ENCODE measurements at regions of chr1 and their contacts with region 1.

Region 1: GRCh38 chr1:188557052-188557451 is 1728.3 kb downstream of the PLA2G4A start:
- DNase-seq: no peak
- ATAC-seq: no peak
- H3K4me3 ChIP-seq: no peak overlapping the region
- H3K27ac ChIP-seq: no peak overlapping the region
- H3K4me1 ChIP-seq: no peaks in the 10 kb centered on the region
- H3K27me3 ChIP-seq: no peaks in the 10 kb centered on the region
- CTCF ChIP-seq: no peak
- EP300 ChIP-seq: no peak
- POLR2A ChIP-seq: no peak
- RAD21 ChIP-seq: no peak

Region 2: DNA sequence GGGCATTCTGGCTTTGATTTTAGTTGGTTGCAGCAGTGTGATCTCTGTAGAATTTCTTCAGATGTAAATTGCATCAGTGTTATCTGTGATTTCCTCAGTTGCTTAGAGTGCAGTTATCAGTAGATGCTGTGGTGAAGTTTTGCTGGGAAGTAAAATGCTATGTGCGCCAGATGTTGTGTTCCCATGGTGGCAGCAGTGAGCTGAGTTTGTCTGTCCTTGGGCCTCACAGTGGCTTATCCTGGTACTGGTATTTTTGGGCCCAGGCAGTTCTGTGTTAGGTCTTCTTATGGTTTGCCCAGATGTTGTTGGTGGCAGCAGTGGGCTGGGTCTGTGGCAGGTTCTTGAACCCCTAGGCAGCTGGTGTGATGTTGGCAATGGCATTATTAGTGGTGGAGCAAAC is 486.2 kb before region 1 on chr1:
- CTCF ChIA-PET with region 1: no interaction called
- POLR2A ChIA-PET with region 1: no interaction called
- in situ Hi-C with region 1: no loop called
- intact Hi-C with region 1: no loop called
- DNase-seq: no peak
- ATAC-seq: no peak
- H3K4me3 ChIP-seq: no peak overlapping the region
- H3K27ac ChIP-seq: no peak overlapping the region
- H3K4me1 ChIP-seq: no peaks in the 10 kb centered on the region
- H3K27me3 ChIP-seq: no peaks in the 10 kb centered on the region; a peak in 1 of 5 replicates
- CTCF ChIP-seq: 0 out of 6 replicates have a peak, but pooled peaks of 1 of the 3 experiments have one; percentile 8
- EP300 ChIP-seq: no peak
- POLR2A ChIP-seq: no peak
- RAD21 ChIP-seq: no peak

Region 3: DNA sequence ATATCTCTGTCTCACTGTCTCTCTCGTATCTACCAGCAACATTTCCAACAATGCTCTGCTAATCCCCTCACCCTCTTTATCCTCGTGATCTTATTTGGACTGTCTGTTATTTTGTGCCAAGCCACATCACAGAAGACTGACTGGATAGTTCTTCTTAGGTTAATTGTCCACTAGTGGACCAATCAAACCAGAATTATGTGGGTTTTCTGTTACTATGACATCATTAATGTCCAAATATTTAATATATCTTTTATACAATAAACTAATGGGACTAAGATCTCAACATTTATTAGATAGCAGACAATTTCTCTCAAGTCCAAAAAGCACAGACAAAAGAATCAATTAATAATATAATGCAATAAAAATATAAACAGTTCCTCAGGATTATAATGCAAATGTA is 1334.4 kb after region 1 on chr1:
- CTCF ChIA-PET with region 1: interaction called, 11 read pairs
- POLR2A ChIA-PET with region 1: no interaction called
- in situ Hi-C with region 1: no loop called
- intact Hi-C with region 1: no loop called
- DNase-seq: no peak
- ATAC-seq: no peak
- H3K4me3 ChIP-seq: no peak overlapping the region
- H3K27ac ChIP-seq: no peak overlapping the region
- H3K4me1 ChIP-seq: no peaks in the 10 kb centered on the region
- H3K27me3 ChIP-seq: no peaks in the 10 kb centered on the region
- CTCF ChIP-seq: no peak
- EP300 ChIP-seq: no peak
- POLR2A ChIP-seq: no peak
- RAD21 ChIP-seq: no peak

Measured in K562 (cell line).